Gastrocnemius medialis (tissue), 4 donors: ENCODE measurements at regions of chr17 and their contacts with region 1.

Region 1: DNA sequence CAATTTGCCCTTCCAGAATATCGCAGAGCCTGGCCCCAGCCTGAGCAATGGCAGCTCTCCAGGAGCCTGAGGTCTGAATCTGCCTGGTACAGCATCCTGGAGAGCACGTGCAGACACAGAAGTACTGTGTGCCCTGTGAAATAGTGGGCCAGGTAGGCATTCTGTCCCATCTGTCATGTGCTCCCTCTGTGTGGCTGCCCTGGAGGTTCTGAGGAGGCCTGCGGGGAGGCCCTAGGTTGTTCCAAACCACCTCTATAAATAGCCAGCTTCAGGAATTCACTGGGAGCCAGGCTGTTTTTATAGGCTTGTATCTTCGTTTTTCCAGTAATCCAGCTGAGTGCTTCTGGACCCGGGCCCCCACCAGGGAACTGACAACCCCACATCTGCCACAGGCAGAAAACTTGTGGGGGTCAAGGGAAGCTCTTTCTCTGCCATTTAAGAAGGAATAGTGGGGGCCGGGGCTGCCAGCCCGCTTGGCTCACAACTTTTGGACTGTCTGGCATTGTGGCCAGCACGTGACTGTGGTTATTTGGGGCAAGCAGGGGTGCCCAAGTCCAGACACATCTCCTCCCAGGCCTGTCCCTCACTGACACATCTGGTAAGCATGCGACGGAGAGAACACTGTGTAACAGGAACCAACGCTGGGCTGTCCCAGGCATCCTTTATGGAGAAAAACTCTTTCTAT is 356.3 kb upstream of the TNRC6C start:
- DNase-seq: peak; percentile 92 to 93
- ATAC-seq: peak; percentile 93
- H3K4me3 ChIP-seq: peak overlapping the region; percentile 12 to 38 (median 36)
- H3K27ac ChIP-seq: peak overlapping the region; percentile 89 to 99 (median 94)
- H3K4me1 ChIP-seq: peaks cover 27 to 31% of the 10 kb centered on the region in 2 donors
- H3K27me3 ChIP-seq: no peaks in the 10 kb centered on the region
- CTCF ChIP-seq: no peak
- POLR2A ChIP-seq: peak in 1 of 2 donors; percentile 17

Region 2: GRCh38 chr17:77555741-77556291 is 46.4 kb before region 1 on chr17:
- in situ Hi-C with region 1: no loop called
- intact Hi-C with region 1: loop called (anchors 5 kb)
- DNase-seq: peak in 1 of 2 donors; percentile 28
- ATAC-seq: peak in 1 of 2 donors; percentile 16
- H3K4me3 ChIP-seq: peak overlapping the region in 2 of 4 donors; percentile 23 to 31
- H3K27ac ChIP-seq: peak overlapping the region; percentile 45 to 73 (median 55)
- H3K4me1 ChIP-seq: peaks cover 14% of the 10 kb centered on the region in 2 donors
- H3K27me3 ChIP-seq: no peaks in the 10 kb centered on the region
- CTCF ChIP-seq: no peak
- POLR2A ChIP-seq: no peak

Region 3: DNA sequence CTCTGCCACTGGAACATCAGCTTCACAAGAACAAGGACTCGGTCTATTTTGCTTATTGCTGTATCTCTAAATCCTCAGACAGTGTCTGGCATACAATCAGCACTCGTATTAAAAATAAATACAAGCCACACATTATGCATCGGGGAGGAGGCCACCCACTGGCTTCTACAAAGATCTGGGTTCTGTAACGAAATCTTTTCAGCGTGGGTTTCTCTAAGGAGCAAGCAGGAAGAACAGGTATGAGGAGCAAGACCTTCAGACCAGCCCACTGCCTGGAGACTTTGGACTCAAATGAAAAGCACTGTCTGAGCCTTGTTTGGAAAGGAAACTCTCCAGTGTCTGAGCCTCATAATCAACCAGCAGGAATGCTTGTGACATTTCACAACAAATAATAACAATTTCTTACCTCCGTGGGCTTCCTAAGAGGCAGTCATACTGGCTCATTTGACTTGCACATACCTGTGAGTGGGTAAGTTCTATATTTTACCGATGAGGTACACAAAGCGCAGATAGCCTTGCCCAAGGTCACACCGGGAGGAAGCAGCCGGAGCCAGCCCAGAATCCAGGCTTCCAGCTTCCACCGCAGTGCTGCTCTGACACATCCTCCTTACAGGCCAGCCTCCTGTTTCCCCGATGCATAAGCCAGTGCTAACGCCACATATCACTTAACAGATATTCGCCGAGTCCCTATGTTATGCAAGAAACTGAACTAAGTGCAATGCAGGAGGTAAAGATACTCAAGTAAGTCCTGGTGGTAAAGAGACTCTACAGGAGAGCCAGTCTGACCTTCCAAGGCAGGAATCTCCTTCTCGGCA is 237.7 kb after region 1 on chr17:
- in situ Hi-C with region 1: no loop called
- intact Hi-C with region 1: loop called (anchors 2 kb)
- DNase-seq: peak; percentile 36 to 71
- ATAC-seq: peak; percentile 30 to 35
- H3K4me3 ChIP-seq: no peak overlapping the region
- H3K27ac ChIP-seq: peak overlapping the region; percentile 79 to 88 (median 82)
- H3K4me1 ChIP-seq: peaks cover 41 to 42% of the 10 kb centered on the region in 2 donors
- H3K27me3 ChIP-seq: no peaks in the 10 kb centered on the region
- CTCF ChIP-seq: no peak
- POLR2A ChIP-seq: no peak